ENCODE measurements at regions of chr6 and their contacts with region 1.

Region 1: GRCh38 chr6:35522660-35523658 is 10.3 kb upstream of the TULP1 start:
- DNase-seq: peak; percentile 76 to 84 (median 82)
- H3K4me3 ChIP-seq: peak overlapping the region in 1 of 2 donors; percentile 41
- H3K4me3 Mint-ChIP-seq: peak overlapping the region; percentile 20 to 81 (median 75)
- H3K27ac ChIP-seq: no peak overlapping the region
- H3K27ac Mint-ChIP-seq: peak overlapping the region; percentile 76 to 93 (median 86)
- H3K4me1 ChIP-seq: peaks cover 21% of the 10 kb centered on the region
- H3K4me1 Mint-ChIP-seq: peaks cover 14 to 34% (median 21%) of the 10 kb centered on the region in 4 donors
- H3K27me3 ChIP-seq: no peaks in the 10 kb centered on the region
- H3K27me3 Mint-ChIP-seq: no peaks in the 10 kb centered on the region

Region 2: DNA sequence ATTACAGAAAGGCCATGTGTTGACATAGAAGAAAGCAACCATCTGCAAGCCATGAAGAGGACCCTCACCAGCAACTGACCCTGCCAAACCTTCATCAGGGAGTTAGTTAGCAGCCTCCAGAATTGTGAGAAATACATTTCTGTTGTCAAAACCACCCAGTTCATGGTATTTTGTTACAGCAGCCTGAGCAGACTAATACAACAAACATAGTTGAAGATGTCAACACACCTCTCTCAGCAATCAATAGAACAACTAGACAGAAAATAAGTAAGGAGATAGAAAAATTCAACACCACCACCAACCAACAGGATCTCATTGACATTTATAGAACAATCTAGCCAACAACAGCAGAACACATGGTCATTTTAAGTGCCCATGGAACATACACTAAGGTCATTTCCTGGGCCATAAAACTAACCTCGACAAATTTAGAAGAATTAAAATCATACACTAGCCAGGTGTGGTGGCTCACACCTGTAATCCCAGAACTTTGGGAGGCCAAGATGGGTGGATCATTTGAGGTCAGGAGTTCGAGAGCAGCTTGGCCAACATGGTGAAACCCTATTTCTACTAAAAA is 414.6 kb before region 1 on chr6:
- CTCF ChIA-PET with region 1: no interaction called
- POLR2A ChIA-PET with region 1: no interaction called
- intact Hi-C with region 1: no loop called
- DNase-seq: no peak
- H3K4me3 ChIP-seq: no peak overlapping the region
- H3K4me3 Mint-ChIP-seq: no peak overlapping the region
- H3K27ac ChIP-seq: no peak overlapping the region
- H3K27ac Mint-ChIP-seq: no peak overlapping the region
- H3K4me1 ChIP-seq: no peaks in the 10 kb centered on the region
- H3K4me1 Mint-ChIP-seq: no peaks in the 10 kb centered on the region
- H3K27me3 ChIP-seq: no peaks in the 10 kb centered on the region
- H3K27me3 Mint-ChIP-seq: peaks cover 0 to 8% of the 10 kb centered on the region in 2 donors

Region 3: GRCh38 chr6:35510916-35511561 is 11.9 kb before region 1 on chr6:
- CTCF ChIA-PET with region 1: interaction called, 10 read pairs
- POLR2A ChIA-PET with region 1: no interaction called
- intact Hi-C with region 1: no loop called
- DNase-seq: no peak
- H3K4me3 ChIP-seq: no peak overlapping the region
- H3K4me3 Mint-ChIP-seq: no peak overlapping the region
- H3K27ac ChIP-seq: no peak overlapping the region
- H3K27ac Mint-ChIP-seq: peak overlapping the region in 1 of 7 donors; percentile 18
- H3K4me1 ChIP-seq: no peaks in the 10 kb centered on the region
- H3K4me1 Mint-ChIP-seq: peaks cover 0 to 1% (median 0%) of the 10 kb centered on the region in 4 donors
- H3K27me3 ChIP-seq: peaks cover 6% of the 10 kb centered on the region
- H3K27me3 Mint-ChIP-seq: peaks cover 4 to 5% of the 10 kb centered on the region in 2 donors

Region 4: DNA sequence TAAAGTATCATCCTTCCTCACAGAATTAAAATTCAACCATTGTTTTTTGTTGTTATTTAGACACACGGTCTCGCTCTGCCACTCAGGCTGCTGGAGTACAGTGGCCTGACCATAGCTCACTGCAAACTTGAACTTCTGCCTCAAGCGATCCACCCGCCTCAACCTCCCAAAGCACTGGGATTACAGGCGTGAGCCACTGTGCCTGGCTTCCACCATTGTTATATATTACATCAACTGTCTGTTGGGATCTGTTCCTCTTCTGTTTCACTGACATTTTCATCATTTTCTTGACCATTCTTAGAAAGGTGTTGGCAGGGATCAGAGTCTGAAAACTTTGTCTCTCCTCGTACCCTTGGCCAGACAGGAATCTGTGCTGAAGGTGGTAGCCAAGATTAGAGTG is 11.0 kb after region 1 on chr6:
- CTCF ChIA-PET with region 1: interaction called, 11 read pairs
- POLR2A ChIA-PET with region 1: interaction called, 3 read pairs
- intact Hi-C with region 1: no loop called
- DNase-seq: no peak
- H3K4me3 ChIP-seq: no peak overlapping the region
- H3K4me3 Mint-ChIP-seq: no peak overlapping the region
- H3K27ac ChIP-seq: no peak overlapping the region
- H3K27ac Mint-ChIP-seq: peak overlapping the region in 1 of 7 donors; percentile 14
- H3K4me1 ChIP-seq: no peaks in the 10 kb centered on the region
- H3K4me1 Mint-ChIP-seq: peaks cover 1 to 8% (median 6%) of the 10 kb centered on the region in 4 donors
- H3K27me3 ChIP-seq: no peaks in the 10 kb centered on the region
- H3K27me3 Mint-ChIP-seq: peaks cover 6 to 9% of the 10 kb centered on the region in 2 donors

Region 5: DNA sequence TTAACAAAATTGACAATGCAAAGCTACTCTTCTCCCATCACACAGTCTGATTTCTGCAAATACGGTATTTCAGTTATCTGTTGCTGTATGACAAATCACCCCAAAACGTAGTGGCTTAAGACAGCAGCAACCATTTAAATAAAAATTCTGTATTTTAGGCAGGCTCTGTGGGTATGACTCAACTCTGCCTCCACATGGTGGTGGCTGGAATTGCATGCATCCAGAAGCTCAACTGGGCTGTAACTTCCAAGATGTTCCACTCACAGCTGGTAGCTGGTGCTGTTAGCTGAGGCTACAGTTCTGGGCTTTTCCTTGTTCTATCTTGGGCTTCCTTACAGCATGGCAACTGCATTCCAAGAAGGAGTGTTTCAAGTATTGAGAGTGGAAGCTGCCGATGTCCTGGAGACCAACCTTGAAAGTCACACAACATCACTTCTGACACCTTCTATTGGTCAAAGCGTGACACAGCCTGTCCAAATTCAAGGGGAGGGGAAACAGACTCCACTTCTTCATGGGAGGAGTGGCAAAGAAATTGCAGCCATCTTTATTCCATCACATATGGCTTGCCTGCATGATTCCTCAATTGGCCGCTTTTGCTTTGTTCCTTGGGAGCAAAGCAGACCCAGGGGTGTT is 29.4 kb after region 1 on chr6:
- CTCF ChIA-PET with region 1: interaction called, 63 read pairs
- POLR2A ChIA-PET with region 1: interaction called, 14 read pairs
- intact Hi-C with region 1: loop called (anchors 1 kb)
- DNase-seq: peak in 4 of 5 donors; percentile 56 to 62 (median 60)
- H3K4me3 ChIP-seq: no peak overlapping the region
- H3K4me3 Mint-ChIP-seq: no peak overlapping the region
- H3K27ac ChIP-seq: no peak overlapping the region
- H3K27ac Mint-ChIP-seq: no peak overlapping the region
- H3K4me1 ChIP-seq: no peaks in the 10 kb centered on the region
- H3K4me1 Mint-ChIP-seq: peaks cover 0 to 5% (median 3%) of the 10 kb centered on the region in 4 donors
- H3K27me3 ChIP-seq: no peaks in the 10 kb centered on the region
- H3K27me3 Mint-ChIP-seq: peaks cover 2% of the 10 kb centered on the region in 2 donors

Region 6: GRCh38 chr6:35583893-35584688 is 61.1 kb after region 1 on chr6:
- CTCF ChIA-PET with region 1: interaction called, 4 read pairs
- POLR2A ChIA-PET with region 1: interaction called, 3 read pairs
- intact Hi-C with region 1: loop called (anchors 1 kb)
- DNase-seq: peak; percentile 73 to 78 (median 76)
- H3K4me3 ChIP-seq: no peak overlapping the region
- H3K4me3 Mint-ChIP-seq: peak overlapping the region in 5 of 8 donors; percentile 17 to 63 (median 46)
- H3K27ac ChIP-seq: peak overlapping the region; percentile 12
- H3K27ac Mint-ChIP-seq: peak overlapping the region; percentile 39 to 89 (median 83)
- H3K4me1 ChIP-seq: peaks cover 45% of the 10 kb centered on the region
- H3K4me1 Mint-ChIP-seq: peaks cover 47 to 59% (median 50%) of the 10 kb centered on the region in 4 donors
- H3K27me3 ChIP-seq: no peaks in the 10 kb centered on the region
- H3K27me3 Mint-ChIP-seq: no peaks in the 10 kb centered on the region

Region 7: DNA sequence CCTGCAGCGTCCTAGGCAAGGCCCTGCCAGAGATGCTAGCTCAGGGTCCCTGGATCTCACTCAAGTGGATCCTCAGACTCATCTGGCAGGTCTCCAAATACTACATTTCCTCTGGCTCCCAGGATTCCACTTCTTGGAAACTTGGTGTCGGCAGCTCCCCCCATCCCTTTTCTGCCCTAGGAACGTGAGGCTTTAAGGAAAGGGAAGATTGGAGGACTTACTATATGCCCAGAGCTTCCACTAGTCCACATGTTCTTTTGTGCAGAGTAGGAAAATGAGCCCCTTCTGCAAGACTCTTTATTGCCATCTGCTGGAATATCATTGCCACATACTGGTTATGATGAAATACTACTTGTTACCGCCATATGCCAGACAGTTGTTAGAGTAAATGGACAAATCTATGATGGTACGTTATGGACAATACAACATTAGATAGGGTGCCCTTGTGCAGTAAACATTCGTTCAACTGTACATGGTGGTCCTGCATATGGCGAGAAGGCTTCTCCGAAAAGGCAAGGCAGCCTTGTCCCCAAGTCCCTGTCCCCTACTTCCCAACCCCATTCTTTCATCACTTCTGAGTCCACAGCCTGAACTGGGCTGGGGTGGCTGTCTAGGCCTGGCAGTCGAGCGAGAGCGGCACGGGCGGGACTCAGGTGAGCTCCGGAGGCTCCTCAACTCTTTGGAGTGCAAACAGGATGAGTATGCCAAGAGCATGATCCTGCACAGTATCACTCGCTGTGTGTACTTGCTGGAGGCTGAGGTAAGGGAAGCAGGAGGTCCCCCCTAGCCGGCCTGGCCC is 214.7 kb after region 1 on chr6:
- CTCF ChIA-PET with region 1: interaction called, 150 read pairs
- POLR2A ChIA-PET with region 1: interaction called, 15 read pairs
- intact Hi-C with region 1: loop called (anchors 1 kb)
- DNase-seq: peak in 4 of 5 donors; percentile 72 to 76 (median 74)
- H3K4me3 ChIP-seq: no peak overlapping the region
- H3K4me3 Mint-ChIP-seq: peak overlapping the region in 6 of 8 donors; percentile 44 to 81 (median 61)
- H3K27ac ChIP-seq: no peak overlapping the region
- H3K27ac Mint-ChIP-seq: peak overlapping the region; percentile 74 to 94 (median 89)
- H3K4me1 ChIP-seq: peaks cover 48% of the 10 kb centered on the region
- H3K4me1 Mint-ChIP-seq: peaks cover 26 to 52% (median 38%) of the 10 kb centered on the region in 4 donors
- H3K27me3 ChIP-seq: no peaks in the 10 kb centered on the region
- H3K27me3 Mint-ChIP-seq: no peaks in the 10 kb centered on the region